SK-N-SH (cell line): ENCODE measurements at regions of chr11 and their contacts with region 1.

Region 1: GRCh38 chr11:57144075-57144474 is 37.7 kb upstream of the LRRC55 start:
- DNase-seq: no peak
- H3K4me3 ChIP-seq: no peak overlapping the region
- H3K27ac ChIP-seq: peak overlapping the region in 1 of 2 experiments; percentile 99; a peak in 2 of 4 replicates
- H3K4me1 ChIP-seq: peaks cover 0 to 29% of the 10 kb centered on the region in 2 experiments; a peak in 2 of 4 replicates
- H3K27me3 ChIP-seq: no peaks in the 10 kb centered on the region; the same call in 1 of the 2 replicates
- CTCF ChIP-seq: no peak
- EP300 ChIP-seq: no peak
- RAD21 ChIP-seq: peak; percentile 40

Region 2: GRCh38 chr11:57109331-57109730 is 34.7 kb before region 1 on chr11:
- CTCF ChIA-PET with region 1: no interaction called
- POLR2A ChIA-PET with region 1: no interaction called
- DNase-seq: no peak
- H3K4me3 ChIP-seq: no peak overlapping the region
- H3K27ac ChIP-seq: no peak overlapping the region
- H3K4me1 ChIP-seq: no peaks in the 10 kb centered on the region
- H3K27me3 ChIP-seq: no peaks in the 10 kb centered on the region
- CTCF ChIP-seq: no peak
- EP300 ChIP-seq: no peak
- RAD21 ChIP-seq: no peak

Region 3: DNA sequence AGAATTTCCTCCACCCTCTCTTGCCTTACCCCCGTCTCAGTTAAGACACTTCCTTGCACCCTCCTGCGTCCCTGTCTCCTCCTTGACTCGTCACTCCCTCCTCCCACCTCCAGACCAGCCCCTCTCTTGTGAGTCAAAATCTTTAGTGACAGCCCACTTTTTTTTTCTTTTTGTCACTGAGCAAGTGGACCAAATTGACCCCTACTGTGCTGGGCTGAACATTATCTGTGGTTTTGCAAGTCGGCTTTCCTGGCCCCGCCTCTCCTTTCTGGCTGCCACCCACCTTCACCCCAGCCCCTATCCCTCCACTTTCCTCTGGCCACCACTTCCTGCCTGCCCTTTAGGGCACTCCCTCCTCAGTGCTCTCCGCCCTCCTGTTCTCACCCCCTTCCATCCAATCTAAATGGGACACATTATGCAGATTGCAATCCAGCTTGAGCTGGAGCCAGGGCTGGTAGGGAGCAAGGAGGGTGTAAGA is 93.2 kb after region 1 on chr11 and contains the start of gene APLNR:
- CTCF ChIA-PET with region 1: interaction called, 8 read pairs
- POLR2A ChIA-PET with region 1: interaction called, 11 read pairs
- DNase-seq: no peak
- H3K4me3 ChIP-seq: no peak within 1 kb of the TSS
- H3K27ac ChIP-seq: peak within 1 kb of the TSS in 1 of 2 experiments; percentile 48; a peak in 2 of 4 replicates
- H3K4me1 ChIP-seq: peaks cover 0 to 41% of the 10 kb centered on the region in 2 experiments; a peak in 2 of 4 replicates
- H3K27me3 ChIP-seq: peaks cover 2% of the 10 kb centered on the region; the same call in 1 of the 2 replicates
- CTCF ChIP-seq: no peak
- EP300 ChIP-seq: no peak
- RAD21 ChIP-seq: no peak
- polyA plus RNA-seq, gene APLNR: 0.03 and 0.15 TPM in 2 replicates

Region 4: GRCh38 chr11:57387289-57388030 is 243.4 kb after region 1 on chr11:
- CTCF ChIA-PET with region 1: no interaction called
- POLR2A ChIA-PET with region 1: no interaction called
- DNase-seq: no peak
- H3K4me3 ChIP-seq: no peak overlapping the region
- H3K27ac ChIP-seq: no peak overlapping the region
- H3K4me1 ChIP-seq: no peaks in the 10 kb centered on the region; a peak in 1 of 4 replicates
- H3K27me3 ChIP-seq: peaks cover 16% of the 10 kb centered on the region; the same call in 1 of the 2 replicates
- CTCF ChIP-seq: no peak
- EP300 ChIP-seq: no peak
- RAD21 ChIP-seq: no peak